ENCODE measurements at regions of chr10 and their contacts with region 1.

Region 1: GRCh38 chr10:101495324-101495925 is 92.6 kb downstream of the POLL start:
- DNase-seq: no peak
- ATAC-seq: no peak
- H3K4me3 Mint-ChIP-seq: no peak overlapping the region
- H3K27ac Mint-ChIP-seq: no peak overlapping the region
- H3K4me1 Mint-ChIP-seq: peaks cover 2% of the 10 kb centered on the region
- H3K27me3 Mint-ChIP-seq: no peaks in the 10 kb centered on the region

Region 2: DNA sequence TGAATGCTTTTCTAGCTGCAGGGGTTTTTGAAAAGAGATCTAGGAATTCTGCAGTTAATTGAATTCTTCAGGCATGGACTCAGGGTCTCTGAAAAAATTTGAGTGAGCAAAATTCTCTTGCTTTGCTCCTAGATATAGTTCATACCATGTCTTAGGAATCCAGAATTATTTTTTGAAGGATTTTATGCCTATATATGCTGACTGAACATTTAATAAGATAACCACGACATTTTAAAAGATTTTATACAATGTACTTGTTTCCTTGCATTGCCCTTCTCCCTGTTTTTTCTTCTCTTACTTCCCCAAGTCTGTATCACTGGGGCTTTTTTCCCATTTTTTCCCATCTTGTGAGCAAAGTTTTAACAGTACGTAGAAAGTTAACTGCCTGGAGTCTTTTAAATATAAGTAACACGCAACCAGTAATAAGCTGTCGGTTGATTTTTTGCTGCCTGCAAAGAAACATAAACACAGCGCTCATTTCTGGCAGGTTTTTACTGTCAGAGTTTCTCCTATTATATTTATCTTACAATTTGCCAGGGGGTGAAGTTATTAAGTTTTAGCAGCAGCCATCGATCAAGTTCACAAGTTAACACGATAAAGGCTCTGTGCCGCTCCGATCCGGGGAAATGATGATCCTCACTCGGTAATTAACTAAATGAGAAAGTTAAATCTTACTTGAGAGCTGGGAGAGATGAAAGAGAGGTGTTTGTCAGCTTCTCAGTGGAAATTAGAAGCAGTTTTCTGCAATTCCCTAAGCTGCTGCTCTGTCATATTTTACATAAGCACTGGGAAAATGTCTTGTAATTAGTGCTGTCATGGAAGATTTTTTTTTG is 11.6 kb after region 1 on chr10:
- CTCF ChIA-PET with region 1: interaction called, 10 read pairs
- POLR2A ChIA-PET with region 1: no interaction called
- intact Hi-C with region 1: no loop called
- DNase-seq: no peak
- ATAC-seq: no peak
- H3K4me3 Mint-ChIP-seq: no peak overlapping the region
- H3K27ac Mint-ChIP-seq: no peak overlapping the region
- H3K4me1 Mint-ChIP-seq: no peaks in the 10 kb centered on the region
- H3K27me3 Mint-ChIP-seq: no peaks in the 10 kb centered on the region

Region 3: DNA sequence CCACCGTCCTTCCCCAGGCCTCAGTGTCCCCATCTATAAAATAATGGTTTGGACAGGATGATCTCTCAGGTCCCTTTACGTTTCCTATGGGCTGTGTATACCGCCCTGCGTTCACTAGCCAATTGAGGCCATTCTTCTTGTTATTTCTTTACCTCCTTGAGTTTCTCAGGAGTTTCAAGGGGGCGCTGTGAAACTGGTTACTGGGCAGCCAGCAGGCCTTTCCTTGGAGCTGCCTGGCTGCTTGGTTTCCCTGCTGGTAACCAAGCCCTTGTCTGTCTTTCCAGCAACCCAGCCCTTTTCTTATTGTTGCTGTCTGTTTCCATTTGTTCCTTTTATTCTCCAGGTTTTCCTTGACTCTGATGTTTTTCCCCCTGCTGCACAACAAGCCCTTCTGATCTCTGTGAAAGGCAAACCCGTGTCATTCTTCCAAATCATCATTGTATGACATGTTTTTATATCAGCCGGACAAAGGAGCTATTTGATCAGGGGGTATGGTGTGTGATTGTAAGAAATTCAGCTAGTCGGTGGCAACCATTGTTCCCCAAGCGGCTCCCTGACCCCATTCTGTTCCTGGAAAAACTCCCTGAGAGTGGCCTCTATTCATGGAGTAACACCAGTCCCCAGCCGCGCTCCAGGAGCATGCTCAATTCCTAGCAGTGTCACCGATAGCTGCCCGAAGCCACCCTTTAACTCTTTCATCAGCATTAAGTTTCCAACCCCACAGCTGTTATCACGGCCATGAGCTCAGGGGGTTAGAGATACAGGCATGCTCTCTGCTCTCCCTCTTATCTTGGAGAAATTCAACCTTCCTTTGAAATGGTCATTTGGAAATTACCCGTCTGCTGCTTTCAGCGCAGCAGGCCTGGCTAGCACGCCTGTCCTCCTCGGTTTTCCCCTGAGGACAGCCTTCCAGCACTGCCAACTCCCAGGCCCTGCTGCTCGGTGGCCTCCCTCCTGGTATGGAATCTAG is 253.9 kb after region 1 on chr10:
- CTCF ChIA-PET with region 1: no interaction called
- POLR2A ChIA-PET with region 1: no interaction called
- intact Hi-C with region 1: loop called in 1 of 2 experiments (anchors 10 kb)
- DNase-seq: no peak
- ATAC-seq: no peak
- H3K4me3 Mint-ChIP-seq: no peak overlapping the region
- H3K27ac Mint-ChIP-seq: no peak overlapping the region
- H3K4me1 Mint-ChIP-seq: no peaks in the 10 kb centered on the region
- H3K27me3 Mint-ChIP-seq: peaks cover 6% of the 10 kb centered on the region